HCT116 (cell line): ENCODE measurements at regions of chr22 and their contacts with region 1.

Region 1: DNA sequence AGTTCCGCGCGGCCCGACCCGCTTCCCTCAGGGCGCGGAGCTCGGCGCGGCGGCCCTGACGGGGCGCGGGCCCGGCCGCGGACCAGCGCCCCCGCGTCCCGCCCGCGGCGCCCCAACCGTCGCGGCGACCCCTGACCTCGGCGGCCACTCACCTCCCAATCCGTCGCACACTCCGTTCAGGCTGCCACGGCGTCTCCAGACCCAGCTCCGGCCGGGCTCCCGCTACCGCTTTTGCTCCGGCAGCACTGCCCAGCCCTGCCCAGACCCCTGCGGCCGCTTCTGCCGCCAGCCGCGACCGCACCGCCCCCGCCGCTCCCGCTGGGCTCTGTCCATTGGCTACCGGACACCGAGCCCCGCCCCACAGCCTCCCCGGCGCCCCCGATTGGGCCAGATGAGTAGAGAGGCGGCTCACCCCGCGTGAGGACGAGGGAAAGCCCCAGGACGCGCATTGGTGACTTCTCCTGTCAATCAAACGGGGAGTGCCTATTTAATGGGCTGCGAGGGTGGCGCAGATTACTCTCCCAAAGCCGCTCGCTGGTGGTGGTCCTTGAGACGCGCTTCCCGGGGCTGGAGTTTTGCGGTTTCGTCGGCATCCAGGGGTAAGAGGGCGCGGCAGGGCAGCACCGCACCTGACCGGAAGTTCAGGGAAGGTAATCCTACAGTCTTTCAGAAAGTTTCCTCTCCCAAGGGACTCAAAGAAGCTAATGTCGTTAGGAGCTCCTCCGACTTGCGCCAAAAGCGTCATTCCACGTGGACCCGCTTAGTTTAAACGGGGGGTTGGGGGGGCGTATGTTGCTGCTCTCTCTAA is at the start of gene PACSIN2:
- DNase-seq: peak; percentile 93
- ATAC-seq: peak; percentile 97
- H3K4me3 ChIP-seq: peak within 1 kb of the TSS; percentile 84 to 88
- H3K27ac ChIP-seq: peak within 1 kb of the TSS; percentile 71; the same call in 1 of the 2 replicates
- H3K4me1 ChIP-seq: peaks cover 38% of the 10 kb centered on the region in 2 experiments
- H3K27me3 ChIP-seq: no peaks in the 10 kb centered on the region
- CTCF ChIP-seq: no peak
- POLR2A ChIP-seq: peak; percentile 98
- RAD21 ChIP-seq: no peak
- total RNA-seq, gene PACSIN2: 48.2 TPM

Region 2: DNA sequence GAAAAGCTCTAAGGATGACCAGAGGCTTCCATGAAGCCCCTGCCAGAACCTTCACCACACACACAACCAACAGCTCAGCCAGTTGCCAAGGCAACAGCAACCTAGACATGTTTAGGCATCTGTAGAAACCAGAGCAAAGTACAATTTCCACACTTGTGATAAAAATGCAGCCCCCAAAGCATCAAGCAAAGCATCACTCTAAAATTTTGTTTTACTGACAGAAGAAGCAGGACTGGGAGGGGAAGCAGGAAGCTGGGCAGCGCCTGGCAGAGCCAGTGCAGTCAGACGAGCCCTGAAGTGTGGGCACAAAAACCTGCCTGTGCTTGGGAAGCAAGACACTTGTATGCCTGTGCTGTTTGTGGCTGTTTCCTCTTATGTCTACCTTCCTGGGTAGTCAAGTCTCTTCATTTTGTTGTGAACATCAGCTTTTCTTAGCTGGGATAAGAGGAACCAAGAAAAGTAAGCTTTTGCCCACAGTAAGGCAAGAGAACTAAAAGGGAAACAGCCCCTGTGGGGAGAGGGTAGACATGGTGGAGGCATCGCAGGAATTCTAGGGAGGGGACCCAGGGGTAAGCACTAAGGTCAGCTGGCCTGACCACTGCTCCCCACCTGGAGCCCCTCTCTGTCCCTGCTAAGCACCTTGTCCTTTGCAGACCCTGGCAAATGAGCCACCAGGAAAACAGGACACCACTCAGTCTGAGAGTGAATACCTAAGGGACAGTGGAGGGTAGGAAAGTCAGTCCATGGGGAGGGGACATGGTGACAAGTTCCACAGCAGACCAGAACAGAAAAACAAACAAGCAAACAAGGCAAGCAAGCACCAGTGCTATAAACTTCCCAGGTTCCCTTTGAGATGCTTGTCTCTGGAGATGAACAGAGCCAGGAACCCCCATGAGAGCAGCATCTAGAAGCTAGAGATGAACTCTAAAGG is 13.5 kb before region 1 on chr22:
- CTCF ChIA-PET with region 1: no interaction called
- POLR2A ChIA-PET with region 1: interaction called, 33 read pairs
- RAD21 ChIA-PET with region 1: interaction called in 1 of 2 experiments, 3 read pairs
- intact Hi-C with region 1: no loop called
- DNase-seq: no peak
- ATAC-seq: no peak
- H3K4me3 ChIP-seq: no peak overlapping the region
- H3K27ac ChIP-seq: peak overlapping the region; percentile 39; the same call in 1 of the 2 replicates
- H3K4me1 ChIP-seq: peaks cover 53 to 76% of the 10 kb centered on the region in 2 experiments
- H3K27me3 ChIP-seq: no peaks in the 10 kb centered on the region
- CTCF ChIP-seq: no peak
- POLR2A ChIP-seq: no peak
- RAD21 ChIP-seq: no peak

Region 3: GRCh38 chr22:43031617-43032016 is 16.5 kb after region 1 on chr22:
- CTCF ChIA-PET with region 1: interaction called, 4 read pairs
- POLR2A ChIA-PET with region 1: interaction called, 10 read pairs
- RAD21 ChIA-PET with region 1: no interaction called
- intact Hi-C with region 1: no loop called
- DNase-seq: no peak
- ATAC-seq: no peak
- H3K4me3 ChIP-seq: no peak overlapping the region
- H3K27ac ChIP-seq: no peak overlapping the region
- H3K4me1 ChIP-seq: peaks cover 13 to 21% of the 10 kb centered on the region in 2 experiments
- H3K27me3 ChIP-seq: no peaks in the 10 kb centered on the region
- CTCF ChIP-seq: no peak
- POLR2A ChIP-seq: no peak
- RAD21 ChIP-seq: no peak